ENCODE measurements at regions of chr4 and their contacts with region 1.

Region 1: DNA sequence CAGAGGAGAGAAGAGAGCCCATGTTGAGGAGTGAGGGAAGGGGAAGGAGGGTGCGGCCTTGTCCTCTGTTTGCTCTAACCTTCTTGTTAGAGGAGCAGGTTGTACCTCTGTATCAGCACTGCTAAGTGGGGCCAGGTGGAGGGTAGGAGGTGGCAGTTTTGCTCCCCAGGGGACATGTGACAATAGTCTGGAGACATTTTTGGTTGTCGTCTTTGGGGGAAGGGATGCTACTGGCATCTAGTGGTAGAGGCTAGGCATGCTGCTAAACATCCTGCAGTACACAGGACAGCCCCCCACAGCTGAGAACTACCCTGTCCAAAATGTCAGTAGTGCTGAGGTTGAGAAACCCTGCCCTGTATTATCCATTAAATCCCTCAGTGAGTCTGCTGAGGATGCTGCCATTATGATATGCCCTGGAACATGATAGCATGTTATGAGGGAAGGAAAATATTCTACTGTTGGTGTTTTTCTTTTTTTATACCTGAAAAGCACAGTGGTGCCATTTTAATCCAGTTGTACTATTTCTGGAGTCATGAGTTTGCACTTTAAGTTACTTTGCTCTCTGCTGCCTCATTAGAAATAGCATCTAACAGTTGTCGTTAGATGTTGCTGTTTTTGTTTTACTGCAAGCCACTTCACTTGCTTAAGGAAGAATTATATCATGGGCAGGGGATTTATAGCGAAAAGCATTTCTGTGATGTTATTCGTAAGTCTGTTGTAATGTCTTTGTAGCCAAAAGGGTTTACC is 90.6 kb downstream of the LRP2BP start:
- DNase-seq: peak in 5 of 9 experiments; percentile 6 to 50 (median 45)
- ATAC-seq: peak; percentile 94
- H3K4me3 ChIP-seq: no peak overlapping the region
- H3K4me3 Mint-ChIP-seq: no peak overlapping the region
- H3K27ac ChIP-seq: no peak overlapping the region
- H3K27ac Mint-ChIP-seq: no peak overlapping the region
- H3K4me1 ChIP-seq: no peaks in the 10 kb centered on the region
- H3K4me1 Mint-ChIP-seq: no peaks in the 10 kb centered on the region
- H3K27me3 ChIP-seq: no peaks in the 10 kb centered on the region
- H3K27me3 Mint-ChIP-seq: no peaks in the 10 kb centered on the region
- CTCF ChIP-seq: peak; percentile 42

Region 2: GRCh38 chr4:185039508-185040273 is 265.4 kb before region 1 on chr4:
- CTCF ChIA-PET with region 1: interaction called, 4 read pairs
- POLR2A ChIA-PET with region 1: no interaction called
- intact Hi-C with region 1: loop called (anchors 2 to 5 kb)
- DNase-seq: peak; percentile 9 to 72 (median 47)
- ATAC-seq: peak; percentile 77
- H3K4me3 ChIP-seq: no peak overlapping the region
- H3K4me3 Mint-ChIP-seq: peak overlapping the region; percentile 44
- H3K27ac ChIP-seq: no peak overlapping the region
- H3K27ac Mint-ChIP-seq: no peak overlapping the region
- H3K4me1 ChIP-seq: peaks cover 6% of the 10 kb centered on the region
- H3K4me1 Mint-ChIP-seq: peaks cover 4% of the 10 kb centered on the region
- H3K27me3 ChIP-seq: no peaks in the 10 kb centered on the region
- H3K27me3 Mint-ChIP-seq: peaks cover 16% of the 10 kb centered on the region
- CTCF ChIP-seq: peak; percentile 86